Psoas muscle (tissue), 8 donors: ENCODE measurements at regions of chr4 and their contacts with region 1.

Region 1: GRCh38 chr4:109207060-109207459 is 95.4 kb downstream of the COL25A1 start:
- DNase-seq: no peak
- ATAC-seq: peak; percentile 84 to 92 (median 86)
- H3K4me3 ChIP-seq: no peak overlapping the region
- H3K27ac ChIP-seq: peak overlapping the region; percentile 11
- H3K4me1 ChIP-seq: peaks cover 22% of the 10 kb centered on the region
- H3K27me3 ChIP-seq: no peaks in the 10 kb centered on the region
- CTCF ChIP-seq: no peak

Region 2: DNA sequence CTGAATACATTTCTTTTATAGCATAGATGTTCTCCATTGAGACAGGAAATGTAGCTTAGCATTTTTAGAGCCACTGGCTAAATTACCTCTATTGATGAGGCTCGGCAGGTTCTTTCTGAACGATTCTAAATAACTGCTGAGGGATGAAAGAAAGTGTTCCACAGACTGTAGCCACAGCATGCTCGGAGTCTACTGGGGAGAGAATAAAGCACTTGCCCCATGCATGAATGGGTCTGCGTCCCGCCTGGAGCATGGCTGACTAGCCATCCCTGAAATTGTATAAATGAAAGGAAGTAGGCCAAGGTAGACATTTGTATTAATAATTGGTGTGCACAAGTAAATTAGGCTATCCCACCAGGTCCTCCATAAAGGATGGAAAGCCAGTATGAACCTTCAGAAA is 174.4 kb before region 1 on chr4:
- intact Hi-C with region 1: no loop called
- DNase-seq: no peak
- ATAC-seq: no peak
- H3K4me3 ChIP-seq: no peak overlapping the region
- H3K27ac ChIP-seq: no peak overlapping the region
- H3K4me1 ChIP-seq: no peaks in the 10 kb centered on the region
- H3K27me3 ChIP-seq: no peaks in the 10 kb centered on the region
- CTCF ChIP-seq: no peak

Region 3: GRCh38 chr4:109294006-109294405 is 86.9 kb after region 1 on chr4:
- intact Hi-C with region 1: loop called in 1 of 2 experiments (anchors 10 kb)
- DNase-seq: no peak
- ATAC-seq: peak in 1 of 4 donors; percentile 42
- H3K4me3 ChIP-seq: no peak overlapping the region
- H3K27ac ChIP-seq: no peak overlapping the region
- H3K4me1 ChIP-seq: peaks cover 4% of the 10 kb centered on the region
- H3K27me3 ChIP-seq: no peaks in the 10 kb centered on the region
- CTCF ChIP-seq: peak; percentile 19